ENCODE measurements at regions of chr20 and their contacts with region 1.

Region 1: GRCh38 chr20:31849455-31849925 is 4.1 kb upstream of the FOXS1 start:
- DNase-seq: no peak
- H3K4me3 ChIP-seq: no peak overlapping the region
- CTCF ChIP-seq: no peak

Region 2: GRCh38 chr20:31822421-31823330 is 26.8 kb before region 1 on chr20:
- CTCF ChIA-PET with region 1: interaction called, 242 read pairs
- POLR2A ChIA-PET with region 1: interaction called, 3 read pairs
- DNase-seq: no peak
- H3K4me3 ChIP-seq: no peak overlapping the region
- CTCF ChIP-seq: peak; percentile 98

Region 3: GRCh38 chr20:31861346-31862156 is 12.1 kb after region 1 on chr20:
- CTCF ChIA-PET with region 1: interaction called, 113 read pairs
- POLR2A ChIA-PET with region 1: no interaction called
- DNase-seq: no peak
- H3K4me3 ChIP-seq: peak overlapping the region; percentile 48
- CTCF ChIP-seq: no peak

Region 4: GRCh38 chr20:31879143-31879987 is 29.9 kb after region 1 on chr20:
- CTCF ChIA-PET with region 1: interaction called, 13 read pairs
- POLR2A ChIA-PET with region 1: no interaction called
- DNase-seq: peak; percentile 37
- H3K4me3 ChIP-seq: peak overlapping the region; percentile 74
- CTCF ChIP-seq: no peak

Region 5: DNA sequence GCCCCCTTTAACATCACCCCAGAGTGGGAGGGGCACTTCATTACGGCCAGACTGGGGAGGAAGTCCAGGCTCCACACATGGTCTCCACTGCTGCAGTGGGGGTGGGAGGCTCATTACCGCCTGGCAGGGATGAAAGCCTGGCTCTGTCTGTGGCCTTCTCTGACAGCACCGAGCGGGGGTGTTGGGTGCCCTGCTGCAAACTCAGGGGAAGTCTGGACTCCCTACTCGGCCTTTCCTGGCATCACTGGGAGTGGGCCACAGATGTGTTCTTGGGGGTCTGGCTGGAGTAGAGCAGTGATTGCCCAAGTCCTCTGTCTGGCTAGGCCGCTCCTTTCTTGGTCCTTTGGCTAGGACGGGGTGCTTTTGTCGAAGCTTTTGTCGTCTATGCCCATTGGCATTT is 48.1 kb after region 1 on chr20:
- CTCF ChIA-PET with region 1: no interaction called
- POLR2A ChIA-PET with region 1: no interaction called
- DNase-seq: no peak
- H3K4me3 ChIP-seq: no peak overlapping the region
- CTCF ChIP-seq: no peak

Region 6: DNA sequence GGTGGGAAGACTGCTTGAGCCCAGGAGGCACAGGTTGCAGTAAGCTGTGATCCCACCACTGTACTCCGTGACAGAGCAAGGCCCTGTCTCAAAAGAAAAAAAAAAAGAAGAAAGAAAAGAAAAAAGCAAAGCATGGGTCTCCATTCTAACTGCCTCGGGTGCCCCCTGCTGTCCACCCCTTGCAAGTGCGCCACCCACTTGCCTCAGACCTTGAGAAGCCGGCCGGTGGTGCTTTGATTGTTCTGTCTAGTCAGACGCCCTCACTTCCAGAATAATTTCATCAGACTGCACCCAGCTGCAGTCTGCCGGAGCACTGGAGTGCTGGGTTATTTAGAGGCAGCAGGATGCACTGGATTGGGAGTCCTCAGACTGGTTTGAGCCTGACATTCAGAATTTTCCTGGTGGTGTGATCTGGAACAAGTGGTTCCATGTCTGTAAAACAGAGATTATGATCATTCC is 242.4 kb after region 1 on chr20:
- CTCF ChIA-PET with region 1: interaction called, 125 read pairs
- POLR2A ChIA-PET with region 1: no interaction called
- DNase-seq: peak; percentile 16
- H3K4me3 ChIP-seq: no peak overlapping the region
- CTCF ChIP-seq: peak; percentile 89

Measured in AG04449 (cell line).